ENCODE measurements at regions of chr11 and their contacts with region 1.

Region 1: GRCh38 chr11:119101759-119102423 is at the start of gene DPAGT1:
- DNase-seq: peak; percentile 84
- H3K4me3 Mint-ChIP-seq: peak within 1 kb of the TSS; percentile 91
- H3K27ac Mint-ChIP-seq: peak within 1 kb of the TSS; percentile 98
- H3K4me1 Mint-ChIP-seq: peaks cover 32% of the 10 kb centered on the region
- H3K27me3 Mint-ChIP-seq: no peaks in the 10 kb centered on the region
- total RNA-seq, gene DPAGT1: 82.2 and 83.4 TPM in 2 replicates

Region 2: DNA sequence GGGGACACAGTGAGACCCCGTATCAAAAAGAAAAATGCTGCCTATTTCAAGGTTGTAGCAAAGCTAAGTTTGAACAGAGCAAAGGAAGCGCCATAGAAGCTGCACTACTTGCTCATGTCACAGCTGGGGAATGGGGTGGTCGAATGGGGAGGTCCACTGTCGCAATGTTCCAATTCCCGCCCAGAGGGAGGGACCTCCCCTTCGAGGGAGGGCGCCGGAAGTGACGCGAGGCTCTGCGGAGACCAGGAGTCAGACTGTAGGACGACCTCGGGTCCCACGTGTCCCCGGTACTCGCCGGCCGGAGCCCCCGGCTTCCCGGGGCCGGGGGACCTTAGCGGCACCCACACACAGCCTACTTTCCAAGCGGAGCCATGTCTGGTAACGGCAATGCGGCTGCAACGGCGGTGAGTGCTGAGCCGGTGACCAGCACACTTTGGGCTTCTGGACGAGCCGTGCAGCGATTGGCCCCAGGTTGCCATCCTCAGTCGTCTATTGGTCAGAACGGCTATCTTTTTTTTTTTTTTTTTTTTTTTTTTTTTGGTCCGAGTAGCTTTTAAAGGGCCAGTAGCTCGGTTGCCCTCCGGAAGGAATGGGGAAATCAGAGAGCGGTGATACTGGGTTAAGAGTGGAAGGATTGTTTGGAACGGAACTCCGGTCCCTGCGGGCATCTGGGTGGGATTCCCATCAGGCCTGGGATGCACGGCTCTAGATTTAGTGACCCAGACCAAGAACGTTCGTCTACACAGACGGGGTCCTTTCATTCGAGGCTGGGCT is 17.0 kb before region 1 on chr11 and contains the start of gene HMBS:
- intact Hi-C with region 1: loop called (anchors 1 kb)
- DNase-seq: peak; percentile 91
- H3K4me3 Mint-ChIP-seq: peak within 1 kb of the TSS; percentile 96
- H3K27ac Mint-ChIP-seq: peak within 1 kb of the TSS; percentile 93
- H3K4me1 Mint-ChIP-seq: peaks cover 29% of the 10 kb centered on the region
- H3K27me3 Mint-ChIP-seq: no peaks in the 10 kb centered on the region
- total RNA-seq, gene HMBS: 57.4 and 59.0 TPM in 2 replicates

Region 3: GRCh38 chr11:119115484-119116234 is 13.8 kb after region 1 on chr11:
- intact Hi-C with region 1: loop called (anchors 1 kb)
- DNase-seq: no peak
- H3K4me3 Mint-ChIP-seq: peak overlapping the region; percentile 73
- H3K27ac Mint-ChIP-seq: peak overlapping the region; percentile 92
- H3K4me1 Mint-ChIP-seq: peaks cover 20% of the 10 kb centered on the region
- H3K27me3 Mint-ChIP-seq: no peaks in the 10 kb centered on the region

Region 4: DNA sequence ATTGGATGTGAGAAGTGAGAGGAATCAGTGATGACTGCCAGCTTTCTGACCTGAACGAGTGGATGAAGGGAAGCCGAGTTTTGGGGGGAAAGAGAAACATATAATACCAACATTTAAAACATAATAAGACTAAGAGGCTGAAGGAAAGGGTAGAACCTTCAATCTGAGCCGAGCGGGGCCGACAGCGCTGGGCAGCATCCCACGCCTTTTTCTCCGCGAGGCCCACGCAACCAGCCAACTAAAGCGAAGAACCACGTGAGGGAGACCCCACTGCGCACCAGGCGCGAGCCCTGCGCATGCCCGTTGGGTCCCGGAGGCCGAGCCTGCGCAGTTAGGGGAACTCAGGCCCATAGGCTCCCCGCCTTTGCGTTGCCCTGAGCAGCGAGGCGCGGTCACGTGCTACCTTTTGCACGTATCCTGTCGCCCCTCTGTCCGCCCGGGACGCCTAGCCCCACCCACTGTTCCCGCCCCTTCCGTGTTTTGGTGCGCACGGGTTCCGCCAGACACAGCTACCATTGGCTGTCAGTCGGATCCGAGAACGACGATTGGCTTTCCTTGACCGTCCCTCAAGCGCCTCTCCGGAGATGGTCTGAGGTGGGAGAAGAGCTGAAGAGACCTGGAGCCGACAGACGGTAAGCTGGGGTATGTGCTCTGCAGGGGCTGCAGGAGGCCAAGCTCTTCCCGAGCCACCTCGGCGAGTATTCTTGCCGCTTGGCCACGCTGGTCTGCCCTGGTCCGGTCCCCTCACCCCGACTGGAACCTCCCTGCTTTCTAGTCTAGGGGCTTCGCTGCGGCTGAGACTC is 19.3 kb after region 1 on chr11 and contains the start of gene HINFP:
- intact Hi-C with region 1: loop called (anchors 1 kb)
- DNase-seq: peak; percentile 99
- H3K4me3 Mint-ChIP-seq: peak within 1 kb of the TSS; percentile 92
- H3K27ac Mint-ChIP-seq: peak within 1 kb of the TSS; percentile 87
- H3K4me1 Mint-ChIP-seq: peaks cover 22% of the 10 kb centered on the region
- H3K27me3 Mint-ChIP-seq: no peaks in the 10 kb centered on the region
- total RNA-seq, gene HINFP: 29.8 and 35.5 TPM in 2 replicates

Region 5: GRCh38 chr11:119168471-119169281 is 66.8 kb after region 1 on chr11 and contains the start of gene NLRX1:
- intact Hi-C with region 1: loop called (anchors 5 kb)
- DNase-seq: peak; percentile 81
- H3K4me3 Mint-ChIP-seq: peak within 1 kb of the TSS; percentile 88
- H3K27ac Mint-ChIP-seq: peak within 1 kb of the TSS; percentile 89
- H3K4me1 Mint-ChIP-seq: peaks cover 16% of the 10 kb centered on the region
- H3K27me3 Mint-ChIP-seq: no peaks in the 10 kb centered on the region
- total RNA-seq, gene NLRX1: 26.4 and 31.6 TPM in 2 replicates

Region 6: GRCh38 chr11:119334174-119334930 is 232.5 kb after region 1 on chr11 and contains the start of gene RNF26:
- intact Hi-C with region 1: loop called (anchors 1 kb)
- DNase-seq: peak; percentile 93
- H3K4me3 Mint-ChIP-seq: peak within 1 kb of the TSS; percentile 100
- H3K27ac Mint-ChIP-seq: peak within 1 kb of the TSS; percentile 99
- H3K4me1 Mint-ChIP-seq: peaks cover 40% of the 10 kb centered on the region
- H3K27me3 Mint-ChIP-seq: peaks cover 22% of the 10 kb centered on the region
- total RNA-seq, gene RNF26: 29.9 and 32.6 TPM in 2 replicates

Measured in activated T-helper 2 cell treated with anti-CD3 and anti-CD28 coated beads, Interferon-gamma antibody, Interleukin-2, Interleukin-4, amounts not matched to agents 10 μg/mL and 5 μg/mL and 100 μg/mL, durations not matched to agents 14 hours and 24 hours and 36 hours (primary cell).